Naive thymus-derived CD4-positive, alpha-beta T cell (primary cell): ENCODE measurements at regions of chr5 and their contacts with region 1.

Region 1: GRCh38 chr5:40223884-40224402 is 455.8 kb upstream of the PTGER4 start:
- DNase-seq: peak in 1 of 9 donors; percentile 34
- ATAC-seq: peak; percentile 40
- H3K4me3 ChIP-seq: no peak overlapping the region
- H3K4me3 Mint-ChIP-seq: peak overlapping the region in 1 of 10 donors; percentile 70
- H3K27ac ChIP-seq: no peak overlapping the region
- H3K27ac Mint-ChIP-seq: peak overlapping the region in 1 of 9 donors; percentile 79
- H3K4me1 ChIP-seq: peaks cover 0 to 4% of the 10 kb centered on the region in 2 donors
- H3K4me1 Mint-ChIP-seq: peaks cover 0 to 36% (median 6%) of the 10 kb centered on the region in 7 donors
- H3K27me3 ChIP-seq: no peaks in the 10 kb centered on the region
- H3K27me3 Mint-ChIP-seq: peaks cover 0 to 5% (median 0%) of the 10 kb centered on the region in 5 donors

Region 2: GRCh38 chr5:40258222-40258621 is 34.3 kb after region 1 on chr5:
- CTCF ChIA-PET with region 1: no interaction called
- POLR2A ChIA-PET with region 1: no interaction called
- intact Hi-C with region 1: loop called in 1 of 2 experiments (anchors 5 kb)
- DNase-seq: no peak
- ATAC-seq: peak; percentile 24
- H3K4me3 ChIP-seq: no peak overlapping the region
- H3K4me3 Mint-ChIP-seq: peak overlapping the region in 1 of 10 donors; percentile 37
- H3K27ac ChIP-seq: no peak overlapping the region
- H3K27ac Mint-ChIP-seq: peak overlapping the region in 1 of 9 donors; percentile 68
- H3K4me1 ChIP-seq: no peaks in the 10 kb centered on the region
- H3K4me1 Mint-ChIP-seq: peaks cover 0 to 7% (median 0%) of the 10 kb centered on the region in 7 donors
- H3K27me3 ChIP-seq: no peaks in the 10 kb centered on the region
- H3K27me3 Mint-ChIP-seq: no peaks in the 10 kb centered on the region

Region 3: GRCh38 chr5:40277161-40277906 is 53.4 kb after region 1 on chr5:
- CTCF ChIA-PET with region 1: no interaction called
- POLR2A ChIA-PET with region 1: no interaction called
- intact Hi-C with region 1: loop called in 1 of 2 experiments (anchors 1 kb)
- DNase-seq: peak in 2 of 9 donors; percentile 6 to 34
- ATAC-seq: peak; percentile 72
- H3K4me3 ChIP-seq: no peak overlapping the region
- H3K4me3 Mint-ChIP-seq: peak overlapping the region in 9 of 10 donors; percentile 7 to 72 (median 42)
- H3K27ac ChIP-seq: peak overlapping the region; percentile 45
- H3K27ac Mint-ChIP-seq: peak overlapping the region; percentile 66 to 88 (median 76)
- H3K4me1 ChIP-seq: peaks cover 9 to 16% of the 10 kb centered on the region in 2 donors
- H3K4me1 Mint-ChIP-seq: peaks cover 18 to 39% (median 33%) of the 10 kb centered on the region in 7 donors
- H3K27me3 ChIP-seq: no peaks in the 10 kb centered on the region
- H3K27me3 Mint-ChIP-seq: no peaks in the 10 kb centered on the region